H1 (cell line): ENCODE measurements at regions of chr1 and their contacts with region 1.

Region 1: DNA sequence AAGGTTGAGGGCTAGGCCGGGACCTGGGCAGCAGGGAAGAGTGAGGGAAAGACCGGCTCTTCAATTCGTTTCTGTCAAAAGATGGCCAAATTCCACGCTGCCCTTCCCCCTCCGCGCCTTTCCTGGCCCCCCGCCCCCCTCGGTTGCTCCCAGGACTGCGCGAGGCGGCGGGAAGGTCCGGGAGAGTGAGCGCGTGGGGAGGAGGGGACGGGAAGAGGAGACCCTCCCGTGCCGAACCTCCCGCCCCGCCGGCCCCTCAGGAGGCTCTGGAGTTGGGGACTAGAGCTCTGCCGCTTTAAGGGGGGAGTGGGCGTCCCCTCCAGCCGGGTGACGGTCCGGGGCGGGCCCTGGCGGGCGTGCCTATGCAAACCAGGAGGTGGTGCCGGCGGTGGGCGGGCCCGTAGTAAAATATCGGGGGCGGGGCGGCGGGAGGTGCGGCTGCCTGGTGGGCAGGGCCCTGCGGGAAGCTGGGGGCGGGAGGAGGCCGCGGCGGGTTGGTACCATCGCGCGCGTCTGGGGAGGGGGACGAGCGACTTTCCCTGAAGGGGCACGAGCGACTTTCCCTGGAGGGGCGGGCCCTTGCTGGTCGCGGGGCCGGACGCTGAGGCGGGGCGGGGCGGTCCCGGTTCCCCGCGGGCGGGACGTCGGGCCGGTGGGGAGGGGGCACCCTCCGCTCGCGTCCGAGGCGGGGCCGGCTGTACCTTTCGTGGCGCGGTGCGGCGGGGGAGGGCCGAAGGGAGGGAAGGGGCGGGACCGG is 58.2 kb downstream of the BCL9 start:
- DNase-seq: peak; percentile 92 to 96
- H3K4me3 ChIP-seq: peak overlapping the region; percentile 60 to 91 (median 77)
- H3K27ac ChIP-seq: peak overlapping the region; percentile 68
- H3K4me1 ChIP-seq: peaks cover 2 to 16% (median 4%) of the 10 kb centered on the region in 4 experiments; a peak in 6 of 7 replicates
- H3K27me3 ChIP-seq: peaks cover 0 to 5% (median 3%) of the 10 kb centered on the region in 4 experiments; a peak in 3 of 7 replicates
- CTCF ChIP-seq: no peak
- EP300 ChIP-seq: peak in 1 of 2 experiments; percentile 43; a peak in 1 of 3 replicates
- POLR2A ChIP-seq: peak; percentile 93 to 95
- RAD21 ChIP-seq: peak in 1 of 2 experiments; percentile 18; a peak in 2 of 4 replicates

Region 2: DNA sequence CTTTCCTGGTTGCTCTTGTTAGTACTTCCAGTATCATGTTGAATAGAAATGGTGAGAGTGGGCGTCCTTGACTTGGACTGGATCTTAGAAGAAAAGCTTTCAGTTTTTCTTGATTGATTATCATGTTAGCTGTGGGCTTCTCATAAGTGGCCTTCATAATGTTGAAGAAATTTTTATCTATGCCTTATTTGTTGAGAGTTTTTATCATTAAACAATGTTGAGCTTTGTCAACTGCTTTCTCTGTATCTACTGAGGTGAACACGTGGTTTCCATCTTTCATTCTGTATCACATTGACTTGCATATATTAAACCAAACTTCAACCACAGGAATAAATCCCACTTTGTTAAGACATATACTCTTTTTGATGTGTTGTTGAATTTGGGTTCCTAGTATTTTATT is 456.7 kb before region 1 on chr1:
- CTCF ChIA-PET with region 1: no interaction called
- POLR2A ChIA-PET with region 1: no interaction called
- DNase-seq: no peak
- H3K4me3 ChIP-seq: no peak overlapping the region
- H3K27ac ChIP-seq: no peak overlapping the region
- H3K4me1 ChIP-seq: no peaks in the 10 kb centered on the region
- H3K27me3 ChIP-seq: no peaks in the 10 kb centered on the region
- CTCF ChIP-seq: no peak
- EP300 ChIP-seq: no peak
- POLR2A ChIP-seq: no peak
- RAD21 ChIP-seq: no peak

Region 3: GRCh38 chr1:147377263-147378246 is 222.0 kb before region 1 on chr1:
- CTCF ChIA-PET with region 1: no interaction called
- POLR2A ChIA-PET with region 1: no interaction called
- DNase-seq: no peak
- H3K4me3 ChIP-seq: no peak overlapping the region
- H3K27ac ChIP-seq: no peak overlapping the region
- H3K4me1 ChIP-seq: no peaks in the 10 kb centered on the region
- H3K27me3 ChIP-seq: no peaks in the 10 kb centered on the region
- CTCF ChIP-seq: no peak
- EP300 ChIP-seq: no peak
- POLR2A ChIP-seq: no peak
- RAD21 ChIP-seq: no peak

Region 4: GRCh38 chr1:147504801-147505311 is 94.7 kb before region 1 on chr1:
- CTCF ChIA-PET with region 1: interaction called, 3 read pairs
- POLR2A ChIA-PET with region 1: interaction called, 10 read pairs
- DNase-seq: peak in 1 of 2 experiments; percentile 84
- H3K4me3 ChIP-seq: peak overlapping the region; percentile 1 to 49 (median 10); a peak in 5 of 8 replicates
- H3K27ac ChIP-seq: peak overlapping the region; percentile 74
- H3K4me1 ChIP-seq: peaks cover 7 to 22% (median 13%) of the 10 kb centered on the region in 4 experiments; a peak in 6 of 7 replicates
- H3K27me3 ChIP-seq: no peaks in the 10 kb centered on the region
- CTCF ChIP-seq: no peak
- EP300 ChIP-seq: no peak
- POLR2A ChIP-seq: peak in 1 of 2 experiments; percentile 64; a peak in 1 of 3 replicates
- RAD21 ChIP-seq: peak in 1 of 2 experiments; percentile 13; a peak in 1 of 4 replicates

Region 5: DNA sequence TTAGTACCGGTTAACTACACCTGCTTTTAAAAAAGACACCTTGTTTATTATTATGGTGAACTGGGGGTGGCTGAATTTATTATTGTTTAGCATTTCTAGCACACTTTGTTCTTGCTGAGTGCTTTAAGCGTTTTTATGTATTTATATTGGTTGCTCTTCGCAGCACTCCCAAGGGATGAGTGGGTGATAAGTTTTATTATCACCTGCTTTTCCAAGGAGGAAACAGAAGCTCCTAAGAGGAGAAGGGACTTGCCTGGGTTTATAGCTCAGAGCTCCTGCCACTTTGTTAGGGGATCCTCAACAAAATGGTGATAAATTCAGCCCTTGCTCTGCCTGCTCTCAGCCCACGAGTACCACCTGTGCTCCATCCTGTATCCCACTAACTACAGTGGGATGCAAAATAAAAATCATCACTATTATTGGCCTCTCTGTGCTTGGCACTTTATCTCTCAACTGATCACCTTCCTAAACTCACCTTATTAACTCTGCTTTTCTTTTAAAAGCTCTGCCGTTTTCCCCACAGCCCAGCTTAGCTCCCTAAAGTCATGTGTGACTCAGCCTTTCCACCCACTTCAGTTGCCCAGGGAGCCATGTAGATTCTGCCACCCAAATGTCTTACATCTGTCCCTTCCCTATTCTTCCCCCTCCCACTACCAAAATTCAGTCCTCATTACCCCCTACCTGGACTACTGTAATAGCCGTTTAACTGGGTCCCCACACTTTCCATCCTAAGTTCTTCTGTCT is 13.7 kb before region 1 on chr1:
- CTCF ChIA-PET with region 1: interaction called, 4 read pairs
- POLR2A ChIA-PET with region 1: interaction called, 45 read pairs
- DNase-seq: no peak
- H3K4me3 ChIP-seq: peak overlapping the region; percentile 14 to 60 (median 31); a peak in 5 of 8 replicates
- H3K27ac ChIP-seq: no peak overlapping the region
- H3K4me1 ChIP-seq: peaks cover 7 to 26% (median 13%) of the 10 kb centered on the region in 4 experiments
- H3K27me3 ChIP-seq: peaks cover 6 to 60% (median 52%) of the 10 kb centered on the region in 4 experiments
- CTCF ChIP-seq: no peak
- EP300 ChIP-seq: no peak
- POLR2A ChIP-seq: no peak
- RAD21 ChIP-seq: no peak

Region 6: DNA sequence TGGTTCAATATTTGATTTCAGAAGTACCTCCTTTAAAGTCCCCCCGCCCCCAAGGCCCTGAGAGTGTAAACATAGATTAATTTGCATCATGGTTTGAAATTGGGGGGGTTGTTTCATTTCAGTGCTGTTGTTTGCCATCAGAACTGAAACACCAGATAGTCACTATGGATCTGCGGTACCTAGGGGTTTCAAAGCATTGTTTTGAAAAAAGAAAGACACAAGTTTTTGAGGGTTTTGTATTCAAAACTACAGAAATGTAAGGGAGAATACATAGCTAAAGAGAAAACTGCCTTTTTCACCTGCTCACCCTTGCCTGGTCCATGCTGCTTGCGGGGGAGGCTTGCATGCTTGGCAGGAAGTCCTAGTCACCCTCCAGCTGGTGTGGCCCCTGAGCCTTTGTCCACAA is 11.5 kb after region 1 on chr1:
- CTCF ChIA-PET with region 1: interaction called, 3 read pairs
- POLR2A ChIA-PET with region 1: interaction called, 15 read pairs
- DNase-seq: no peak
- H3K4me3 ChIP-seq: no peak overlapping the region
- H3K27ac ChIP-seq: peak overlapping the region; percentile 8; the same call in 1 of the 2 replicates
- H3K4me1 ChIP-seq: peaks cover 0 to 8% (median 0%) of the 10 kb centered on the region in 4 experiments; a peak in 2 of 7 replicates
- H3K27me3 ChIP-seq: no peaks in the 10 kb centered on the region
- CTCF ChIP-seq: no peak
- EP300 ChIP-seq: no peak
- POLR2A ChIP-seq: no peak
- RAD21 ChIP-seq: no peak

Region 7: DNA sequence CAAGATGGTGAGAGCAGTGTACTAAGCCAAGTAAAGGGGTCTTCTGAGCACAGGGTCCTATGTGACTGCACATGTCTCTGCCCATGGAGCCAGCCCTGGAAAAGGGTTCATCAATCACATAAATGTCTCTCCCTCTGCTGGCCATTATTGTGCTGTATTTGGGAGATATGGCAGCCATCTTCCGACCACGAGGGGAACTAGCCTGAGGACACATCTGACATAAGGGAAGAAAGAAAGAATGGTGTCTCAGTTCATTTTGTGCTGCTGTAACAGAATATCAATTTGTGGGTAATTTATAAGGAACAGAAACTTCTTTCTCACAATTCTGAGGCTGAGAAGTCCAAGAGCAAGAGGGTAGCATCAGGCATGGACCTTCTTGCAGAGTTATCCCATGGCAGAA is 216.0 kb after region 1 on chr1:
- CTCF ChIA-PET with region 1: no interaction called
- POLR2A ChIA-PET with region 1: no interaction called
- DNase-seq: no peak
- H3K4me3 ChIP-seq: no peak overlapping the region
- H3K27ac ChIP-seq: no peak overlapping the region
- H3K4me1 ChIP-seq: no peaks in the 10 kb centered on the region
- H3K27me3 ChIP-seq: no peaks in the 10 kb centered on the region
- CTCF ChIP-seq: no peak
- EP300 ChIP-seq: no peak
- POLR2A ChIP-seq: no peak
- RAD21 ChIP-seq: no peak